MCF 10A (cell line): ENCODE measurements at regions of chr1 and their contacts with region 1.

Region 1: DNA sequence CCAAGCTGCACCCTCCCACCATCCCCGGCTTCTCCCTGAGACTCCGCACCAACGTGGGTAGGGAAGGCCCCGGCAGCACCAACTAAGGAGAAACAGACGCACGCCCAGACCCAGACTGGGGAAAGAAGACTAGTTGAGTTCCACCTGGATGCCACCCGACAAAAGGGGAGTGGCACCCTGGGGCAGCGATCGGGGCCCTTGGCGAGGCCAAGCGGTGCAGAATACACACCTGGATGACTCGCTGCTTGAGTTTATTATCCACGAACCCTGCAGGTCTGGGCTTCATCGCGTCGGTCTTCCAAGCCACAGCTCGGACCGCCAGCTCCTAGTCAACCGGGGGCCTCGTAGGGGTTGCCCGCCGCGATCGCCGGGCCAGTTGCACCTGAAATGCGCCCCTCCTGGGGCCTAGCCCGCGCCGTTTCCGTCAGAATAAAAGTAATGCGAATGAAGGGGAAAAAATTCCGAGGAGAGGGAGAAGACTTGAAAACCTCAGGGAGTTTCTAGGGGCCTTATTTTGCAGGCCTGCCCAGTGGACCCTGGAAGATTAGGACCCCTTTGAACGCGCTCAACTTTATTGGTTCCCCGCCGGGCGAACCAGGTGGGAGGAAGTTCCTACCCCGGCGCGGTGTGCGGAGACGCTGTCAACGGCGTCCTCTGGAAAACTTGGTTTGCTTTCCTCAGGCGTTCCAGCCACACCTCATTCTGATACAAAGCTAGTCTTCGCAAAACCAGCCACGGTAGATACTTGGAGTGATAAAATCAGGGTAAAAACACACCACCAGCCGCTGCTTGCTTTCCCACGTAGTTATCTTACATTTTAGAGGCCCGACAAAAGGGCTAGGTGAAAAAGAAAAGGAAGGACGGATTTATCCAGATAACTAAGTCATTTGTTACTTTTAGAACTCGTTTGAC is at the start of gene NVL:
- DNase-seq: peak; percentile 98
- H3K4me3 Mint-ChIP-seq: peak within 1 kb of the TSS; percentile 86
- H3K27ac Mint-ChIP-seq: peak within 1 kb of the TSS; percentile 99
- H3K4me1 Mint-ChIP-seq: peaks cover 33% of the 10 kb centered on the region
- H3K27me3 Mint-ChIP-seq: no peaks in the 10 kb centered on the region
- CTCF ChIP-seq: no peak
- total RNA-seq, gene NVL: 69.8 and 81.5 TPM in 2 replicates

Region 2: GRCh38 chr1:223712194-223712849 is 617.8 kb before region 1 on chr1 and contains the start of gene CAPN2:
- CTCF ChIA-PET with region 1: interaction called, 3 read pairs
- POLR2A ChIA-PET with region 1: interaction called, 30 read pairs
- intact Hi-C with region 1: no loop called
- DNase-seq: peak; percentile 94
- H3K4me3 Mint-ChIP-seq: peak within 1 kb of the TSS; percentile 77
- H3K27ac Mint-ChIP-seq: peak within 1 kb of the TSS; percentile 88
- H3K4me1 Mint-ChIP-seq: peaks cover 61% of the 10 kb centered on the region
- H3K27me3 Mint-ChIP-seq: no peaks in the 10 kb centered on the region
- CTCF ChIP-seq: peak; percentile 98
- total RNA-seq, gene CAPN2: 513 and 622 TPM in 2 replicates

Region 3: GRCh38 chr1:224106568-224107281 is 223.4 kb before region 1 on chr1:
- CTCF ChIA-PET with region 1: interaction called, 10 read pairs
- POLR2A ChIA-PET with region 1: interaction called, 10 read pairs
- intact Hi-C with region 1: no loop called
- DNase-seq: peak; percentile 78
- H3K4me3 Mint-ChIP-seq: peak overlapping the region; percentile 35
- H3K27ac Mint-ChIP-seq: peak overlapping the region; percentile 29
- H3K4me1 Mint-ChIP-seq: peaks cover 7% of the 10 kb centered on the region
- H3K27me3 Mint-ChIP-seq: no peaks in the 10 kb centered on the region
- CTCF ChIP-seq: peak; percentile 55

Region 4: DNA sequence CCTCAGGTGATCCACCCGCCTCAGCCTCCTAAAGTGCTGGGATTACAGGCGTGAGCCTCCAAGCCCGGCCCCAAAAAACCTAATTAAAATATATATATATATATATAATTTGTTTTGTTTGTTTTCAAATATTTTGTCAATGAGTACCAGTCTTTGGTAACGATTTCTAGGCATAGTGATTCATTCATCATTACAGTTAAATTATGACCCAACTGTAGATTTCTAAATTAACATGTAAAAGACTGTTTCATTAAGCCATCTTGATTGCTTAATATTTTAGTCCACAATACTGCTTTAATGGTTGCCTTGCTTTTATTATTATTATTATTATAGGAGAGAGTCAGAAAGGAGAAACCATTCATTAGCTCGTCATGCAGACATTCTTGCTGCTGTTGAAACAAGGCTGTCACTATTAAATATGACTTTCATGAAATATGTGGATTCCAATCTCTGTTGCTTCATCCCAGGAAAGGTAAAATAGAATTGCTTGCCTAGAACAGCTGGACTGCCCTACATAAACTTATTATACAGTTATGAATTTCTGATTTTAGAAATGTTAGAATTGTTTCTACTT is 196.3 kb before region 1 on chr1:
- CTCF ChIA-PET with region 1: interaction called, 4 read pairs
- POLR2A ChIA-PET with region 1: interaction called, 16 read pairs
- intact Hi-C with region 1: no loop called
- DNase-seq: no peak
- H3K4me3 Mint-ChIP-seq: no peak overlapping the region
- H3K27ac Mint-ChIP-seq: peak overlapping the region; percentile 46
- H3K4me1 Mint-ChIP-seq: peaks cover 6% of the 10 kb centered on the region
- H3K27me3 Mint-ChIP-seq: no peaks in the 10 kb centered on the region
- CTCF ChIP-seq: no peak

Region 5: DNA sequence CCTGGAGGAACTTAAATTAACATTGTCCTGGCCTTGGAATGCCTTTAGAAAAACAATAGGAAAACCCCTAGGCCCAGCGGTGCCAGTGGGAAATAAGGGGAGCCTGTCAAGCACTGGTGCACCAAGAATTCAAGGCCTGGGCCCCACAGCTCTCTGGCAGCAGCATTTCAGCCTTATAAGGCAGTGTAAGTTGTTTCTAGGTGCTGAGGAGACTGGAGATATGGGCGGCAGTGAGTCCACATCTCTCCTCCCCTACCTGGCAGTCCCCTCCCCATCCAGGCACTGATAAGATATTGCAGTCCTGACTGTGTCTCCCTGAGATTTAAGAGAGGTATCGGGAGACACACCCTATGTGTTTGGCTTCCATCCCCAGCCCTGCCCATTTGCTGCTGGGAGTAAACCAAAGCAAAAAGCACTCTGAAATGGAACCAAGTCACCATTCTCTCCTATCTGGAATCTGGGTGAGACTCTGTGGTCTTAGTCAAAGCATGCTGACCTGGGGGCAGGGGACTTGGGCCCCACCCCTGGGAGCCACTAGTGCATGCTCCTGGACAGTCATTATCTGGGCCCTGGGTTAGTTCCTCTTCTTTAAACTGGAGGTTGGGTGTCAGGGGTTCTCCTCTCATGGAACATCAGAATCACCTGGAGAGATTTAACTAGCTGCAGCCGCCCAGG is 116.5 kb before region 1 on chr1:
- CTCF ChIA-PET with region 1: interaction called, 4 read pairs
- POLR2A ChIA-PET with region 1: interaction called, 12 read pairs
- intact Hi-C with region 1: no loop called
- DNase-seq: peak; percentile 33
- H3K4me3 Mint-ChIP-seq: no peak overlapping the region
- H3K27ac Mint-ChIP-seq: no peak overlapping the region
- H3K4me1 Mint-ChIP-seq: peaks cover 21% of the 10 kb centered on the region
- H3K27me3 Mint-ChIP-seq: no peaks in the 10 kb centered on the region
- CTCF ChIP-seq: no peak

Region 6: GRCh38 chr1:224259936-224260335 is 70.2 kb before region 1 on chr1:
- CTCF ChIA-PET with region 1: no interaction called
- POLR2A ChIA-PET with region 1: no interaction called
- intact Hi-C with region 1: no loop called
- DNase-seq: no peak
- H3K4me3 Mint-ChIP-seq: no peak overlapping the region
- H3K27ac Mint-ChIP-seq: no peak overlapping the region
- H3K4me1 Mint-ChIP-seq: no peaks in the 10 kb centered on the region
- H3K27me3 Mint-ChIP-seq: no peaks in the 10 kb centered on the region
- CTCF ChIP-seq: no peak

Region 7: GRCh38 chr1:224356685-224357625 is 26.9 kb after region 1 on chr1 and contains the start of gene CNIH4:
- CTCF ChIA-PET with region 1: interaction called, 33 read pairs
- POLR2A ChIA-PET with region 1: interaction called, 76 read pairs
- intact Hi-C with region 1: no loop called
- DNase-seq: peak; percentile 99
- H3K4me3 Mint-ChIP-seq: peak within 1 kb of the TSS; percentile 89
- H3K27ac Mint-ChIP-seq: peak within 1 kb of the TSS; percentile 74
- H3K4me1 Mint-ChIP-seq: peaks cover 17% of the 10 kb centered on the region
- H3K27me3 Mint-ChIP-seq: no peaks in the 10 kb centered on the region
- CTCF ChIP-seq: peak; percentile 11
- total RNA-seq, gene CNIH4: 190 and 212 TPM in 2 replicates